Transverse colon (tissue), 4 donors: ENCODE measurements at regions of chr17 and their contacts with region 1.

Region 1: DNA sequence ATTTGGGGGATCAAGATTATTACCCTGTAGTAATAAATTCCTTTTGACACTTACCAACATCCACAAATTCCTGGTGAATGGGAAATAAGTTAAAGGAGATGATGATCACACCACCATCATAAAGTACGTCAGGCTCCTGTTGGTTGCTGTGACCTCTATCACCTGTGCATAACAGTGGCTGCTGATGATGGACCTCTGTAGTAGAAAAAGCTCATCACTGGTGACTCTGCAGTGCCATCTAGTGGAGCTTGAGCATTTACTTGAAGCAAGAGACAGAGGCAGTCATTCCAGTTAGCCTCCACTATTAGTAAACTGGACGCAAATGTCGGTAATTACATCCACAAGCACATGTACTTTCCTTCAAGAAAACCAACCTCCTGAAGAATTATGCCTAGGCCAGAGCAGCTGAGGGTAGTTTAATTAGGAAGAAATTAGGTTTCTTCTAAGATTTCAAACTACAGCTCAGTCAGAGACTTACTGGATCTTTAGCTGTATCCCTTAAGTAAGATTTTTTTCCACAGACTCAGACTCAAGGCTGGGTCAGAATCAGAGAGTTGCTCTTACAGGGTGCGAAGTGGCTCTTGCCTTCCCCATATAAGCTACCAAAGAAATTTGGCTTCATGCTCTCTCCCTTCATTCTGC is 39.3 kb downstream of the CYB561 start:
- DNase-seq: peak; percentile 77
- H3K4me3 ChIP-seq: no peak overlapping the region
- H3K27ac ChIP-seq: no peak overlapping the region
- H3K4me1 ChIP-seq: no peaks in the 10 kb centered on the region
- H3K27me3 ChIP-seq: no peaks in the 10 kb centered on the region
- CTCF ChIP-seq: peak; percentile 75 to 83 (median 80)
- EP300 ChIP-seq: no peak
- POLR2A ChIP-seq: no peak

Region 2: GRCh38 chr17:62692721-62693483 is 713.9 kb before region 1 on chr17:
- in situ Hi-C with region 1: loop called in 2 of 4 experiments (anchors 10 to 25 kb)
- intact Hi-C with region 1: no loop called
- DNase-seq: no peak
- H3K4me3 ChIP-seq: no peak overlapping the region
- H3K27ac ChIP-seq: no peak overlapping the region
- H3K4me1 ChIP-seq: no peaks in the 10 kb centered on the region
- H3K27me3 ChIP-seq: no peaks in the 10 kb centered on the region
- CTCF ChIP-seq: peak in 2 of 5 experiments; percentile 15 to 18
- EP300 ChIP-seq: no peak
- POLR2A ChIP-seq: no peak

Region 3: DNA sequence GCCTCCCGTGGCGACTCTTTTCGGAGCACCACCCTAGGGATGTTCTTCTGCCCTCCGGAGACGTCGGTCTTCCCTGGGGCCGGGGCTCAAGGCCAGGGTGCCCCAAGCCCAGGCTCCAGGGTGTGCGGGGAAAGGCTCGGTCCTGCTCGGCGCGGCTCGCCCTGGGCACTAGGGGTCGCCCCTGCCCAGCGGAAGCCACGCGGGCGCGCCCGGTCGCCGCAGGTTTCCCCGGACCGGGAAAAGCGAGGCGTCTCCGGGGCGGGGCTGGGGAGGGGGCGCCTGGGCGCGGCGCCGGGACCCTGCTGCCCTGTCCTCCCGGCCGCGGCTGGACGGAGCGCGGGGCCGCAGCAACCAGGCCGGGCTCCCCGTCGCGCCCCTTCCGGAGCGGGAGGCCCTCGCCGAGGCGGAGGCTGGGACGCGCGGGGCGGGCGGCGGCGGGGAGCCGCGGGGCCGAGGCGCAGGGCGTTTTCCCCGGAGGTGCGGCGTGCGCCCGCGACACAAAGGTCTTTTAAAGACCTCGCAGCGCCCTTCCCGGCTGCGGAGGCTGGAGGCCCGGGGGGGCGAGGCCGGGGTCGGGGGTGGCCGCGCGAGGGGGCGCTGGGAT is 702.9 kb before region 1 on chr17:
- in situ Hi-C with region 1: loop called (anchors 10 to 25 kb)
- intact Hi-C with region 1: loop called (anchors 5 kb)
- DNase-seq: peak; percentile 76
- H3K4me3 ChIP-seq: peak overlapping the region; percentile 51 to 73 (median 68)
- H3K27ac ChIP-seq: peak overlapping the region; percentile 66 to 77 (median 72)
- H3K4me1 ChIP-seq: peaks cover 0 to 17% (median 13%) of the 10 kb centered on the region in 4 donors
- H3K27me3 ChIP-seq: peaks cover 12% of the 10 kb centered on the region
- CTCF ChIP-seq: peak; percentile 58 to 91 (median 80)
- EP300 ChIP-seq: no peak
- POLR2A ChIP-seq: no peak

Region 4: GRCh38 chr17:62995377-62995885 is 411.4 kb before region 1 on chr17:
- in situ Hi-C with region 1: loop called in 2 of 4 experiments (anchors 10 to 25 kb)
- intact Hi-C with region 1: no loop called
- DNase-seq: peak; percentile 29
- H3K4me3 ChIP-seq: no peak overlapping the region
- H3K27ac ChIP-seq: no peak overlapping the region
- H3K4me1 ChIP-seq: no peaks in the 10 kb centered on the region
- H3K27me3 ChIP-seq: no peaks in the 10 kb centered on the region
- CTCF ChIP-seq: peak; percentile 39 to 53 (median 43)
- EP300 ChIP-seq: no peak
- POLR2A ChIP-seq: no peak

Region 5: GRCh38 chr17:63082273-63082993 is 324.4 kb before region 1 on chr17:
- in situ Hi-C with region 1: loop called in 1 of 4 experiments (anchors 25 kb)
- intact Hi-C with region 1: no loop called
- DNase-seq: no peak
- H3K4me3 ChIP-seq: no peak overlapping the region
- H3K27ac ChIP-seq: no peak overlapping the region
- H3K4me1 ChIP-seq: no peaks in the 10 kb centered on the region
- H3K27me3 ChIP-seq: no peaks in the 10 kb centered on the region
- CTCF ChIP-seq: peak in 4 of 5 experiments; percentile 3 to 46 (median 30)
- EP300 ChIP-seq: no peak
- POLR2A ChIP-seq: no peak

Region 6: GRCh38 chr17:63332286-63332685 is 74.5 kb before region 1 on chr17:
- in situ Hi-C with region 1: no loop called
- intact Hi-C with region 1: no loop called
- DNase-seq: no peak
- H3K4me3 ChIP-seq: no peak overlapping the region
- H3K27ac ChIP-seq: no peak overlapping the region
- H3K4me1 ChIP-seq: no peaks in the 10 kb centered on the region
- H3K27me3 ChIP-seq: no peaks in the 10 kb centered on the region
- CTCF ChIP-seq: no peak
- EP300 ChIP-seq: no peak
- POLR2A ChIP-seq: no peak

Region 7: GRCh38 chr17:64107500-64108235 is 700.9 kb after region 1 on chr17:
- in situ Hi-C with region 1: no loop called
- intact Hi-C with region 1: no loop called
- DNase-seq: no peak
- H3K4me3 ChIP-seq: no peak overlapping the region
- H3K27ac ChIP-seq: peak overlapping the region in 1 of 4 donors; percentile 39
- H3K4me1 ChIP-seq: peaks cover 7 to 37% (median 17%) of the 10 kb centered on the region in 4 donors
- H3K27me3 ChIP-seq: no peaks in the 10 kb centered on the region
- CTCF ChIP-seq: no peak
- EP300 ChIP-seq: no peak
- POLR2A ChIP-seq: no peak